CD8-positive, alpha-beta T cell (primary cell): ENCODE measurements at regions of chr9 and their contacts with region 1.

Region 1: GRCh38 chr9:134443168-134444037 is 117.1 kb downstream of the RXRA start:
- DNase-seq: peak; percentile 70 to 94 (median 88)
- ATAC-seq: peak; percentile 99
- H3K4me3 ChIP-seq: no peak overlapping the region
- H3K4me3 Mint-ChIP-seq: no peak overlapping the region
- H3K27ac ChIP-seq: peak overlapping the region in 1 of 2 experiments; percentile 28
- H3K27ac Mint-ChIP-seq: peak overlapping the region; percentile 67
- H3K4me1 ChIP-seq: peaks cover 12% of the 10 kb centered on the region
- H3K4me1 Mint-ChIP-seq: peaks cover 12% of the 10 kb centered on the region
- H3K27me3 ChIP-seq: peaks cover 5 to 8% of the 10 kb centered on the region in 2 experiments
- H3K27me3 Mint-ChIP-seq: peaks cover 4% of the 10 kb centered on the region
- CTCF ChIP-seq: peak; percentile 91

Region 2: DNA sequence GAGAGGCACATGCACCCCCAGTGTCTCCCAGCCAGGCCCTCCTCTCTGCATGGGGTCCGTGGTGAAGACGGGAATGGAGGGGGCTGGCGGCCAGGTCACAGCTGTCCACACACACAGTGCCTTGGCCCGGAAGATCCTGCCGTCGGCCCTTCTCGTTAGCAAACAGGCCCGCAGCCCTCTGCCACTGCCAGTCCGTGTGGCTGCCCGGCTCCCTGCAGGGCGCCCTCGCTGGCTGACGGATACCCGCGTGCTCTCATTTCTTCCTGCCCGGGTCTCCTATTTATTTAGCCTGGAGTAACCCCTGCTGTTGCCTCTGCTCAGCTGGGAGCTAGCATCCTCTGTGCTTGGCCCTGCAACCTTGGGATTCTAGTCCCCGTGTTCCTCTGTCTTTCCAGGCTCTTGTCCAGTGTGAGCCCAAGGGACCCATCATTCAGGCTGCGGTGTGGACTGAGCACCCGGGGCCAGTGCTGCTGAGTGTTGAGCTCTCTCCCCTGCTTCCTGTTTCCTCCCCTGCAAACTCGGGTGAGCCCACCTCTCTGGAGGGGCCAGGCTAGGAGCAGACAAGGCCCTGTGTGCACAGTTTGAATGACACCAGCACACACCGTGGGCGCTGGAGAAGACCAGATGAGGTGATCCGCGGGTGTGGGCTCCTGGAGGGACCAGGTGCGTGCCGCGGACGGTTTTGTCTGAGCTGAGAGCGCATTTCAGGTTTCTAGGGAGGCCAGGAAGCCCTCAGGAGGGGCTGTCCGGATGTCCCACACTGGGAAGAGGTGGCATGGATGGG is 264.4 kb before region 1 on chr9:
- CTCF ChIA-PET with region 1: interaction called, 18 read pairs
- POLR2A ChIA-PET with region 1: no interaction called
- intact Hi-C with region 1: no loop called
- DNase-seq: peak in 1 of 9 experiments; percentile 13
- ATAC-seq: no peak
- H3K4me3 ChIP-seq: no peak overlapping the region
- H3K4me3 Mint-ChIP-seq: no peak overlapping the region
- H3K27ac ChIP-seq: no peak overlapping the region
- H3K27ac Mint-ChIP-seq: no peak overlapping the region
- H3K4me1 ChIP-seq: peaks cover 22% of the 10 kb centered on the region
- H3K4me1 Mint-ChIP-seq: peaks cover 32% of the 10 kb centered on the region
- H3K27me3 ChIP-seq: peaks cover 0 to 8% of the 10 kb centered on the region in 2 experiments
- H3K27me3 Mint-ChIP-seq: no peaks in the 10 kb centered on the region
- CTCF ChIP-seq: no peak

Region 3: GRCh38 chr9:134344068-134344799 is 99.2 kb before region 1 on chr9:
- CTCF ChIA-PET with region 1: interaction called, 11 read pairs
- POLR2A ChIA-PET with region 1: no interaction called
- intact Hi-C with region 1: no loop called
- DNase-seq: peak in 8 of 9 experiments; percentile 18 to 69 (median 48)
- ATAC-seq: peak; percentile 67
- H3K4me3 ChIP-seq: no peak overlapping the region
- H3K4me3 Mint-ChIP-seq: peak overlapping the region; percentile 22
- H3K27ac ChIP-seq: peak overlapping the region in 1 of 2 experiments; percentile 16
- H3K27ac Mint-ChIP-seq: no peak overlapping the region
- H3K4me1 ChIP-seq: peaks cover 15% of the 10 kb centered on the region
- H3K4me1 Mint-ChIP-seq: peaks cover 17% of the 10 kb centered on the region
- H3K27me3 ChIP-seq: no peaks in the 10 kb centered on the region
- H3K27me3 Mint-ChIP-seq: no peaks in the 10 kb centered on the region
- CTCF ChIP-seq: no peak

Region 4: DNA sequence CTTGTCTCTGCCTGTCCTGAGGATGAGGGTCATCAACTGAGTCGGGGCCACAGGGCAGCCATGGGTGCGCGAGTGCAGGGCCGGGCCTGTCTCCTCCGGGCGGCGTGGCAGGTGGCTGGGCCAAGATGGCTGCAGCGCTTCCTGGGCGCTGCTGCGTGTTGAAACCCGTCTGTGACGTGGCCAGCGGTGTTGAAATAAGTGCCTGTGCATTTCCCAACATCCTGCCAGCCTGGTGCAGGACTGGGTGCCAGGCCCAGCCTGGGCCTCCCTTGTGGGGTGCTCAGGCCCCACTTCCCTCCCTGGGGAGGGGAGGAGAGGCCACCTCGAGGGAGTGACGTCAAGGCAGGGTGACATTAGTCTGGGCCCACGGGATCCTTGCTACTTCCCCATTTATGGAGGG is 71.7 kb before region 1 on chr9:
- CTCF ChIA-PET with region 1: interaction called, 4 read pairs
- POLR2A ChIA-PET with region 1: no interaction called
- intact Hi-C with region 1: loop called in 1 of 2 experiments (anchors 2 kb)
- DNase-seq: peak in 1 of 9 experiments; percentile 48
- ATAC-seq: no peak
- H3K4me3 ChIP-seq: no peak overlapping the region
- H3K4me3 Mint-ChIP-seq: no peak overlapping the region
- H3K27ac ChIP-seq: no peak overlapping the region
- H3K27ac Mint-ChIP-seq: no peak overlapping the region
- H3K4me1 ChIP-seq: no peaks in the 10 kb centered on the region
- H3K4me1 Mint-ChIP-seq: peaks cover 8% of the 10 kb centered on the region
- H3K27me3 ChIP-seq: no peaks in the 10 kb centered on the region
- H3K27me3 Mint-ChIP-seq: no peaks in the 10 kb centered on the region
- CTCF ChIP-seq: no peak

Region 5: GRCh38 chr9:134391314-134392231 is 51.8 kb before region 1 on chr9:
- CTCF ChIA-PET with region 1: interaction called, 17 read pairs
- POLR2A ChIA-PET with region 1: interaction called, 5 read pairs
- intact Hi-C with region 1: loop called in 1 of 2 experiments (anchors 5 kb)
- DNase-seq: peak; percentile 51 to 96 (median 74)
- ATAC-seq: peak; percentile 65
- H3K4me3 ChIP-seq: peak overlapping the region; percentile 41 to 44
- H3K4me3 Mint-ChIP-seq: peak overlapping the region; percentile 77
- H3K27ac ChIP-seq: peak overlapping the region; percentile 92 to 94
- H3K27ac Mint-ChIP-seq: peak overlapping the region; percentile 98
- H3K4me1 ChIP-seq: peaks cover 62% of the 10 kb centered on the region
- H3K4me1 Mint-ChIP-seq: peaks cover 51% of the 10 kb centered on the region
- H3K27me3 ChIP-seq: no peaks in the 10 kb centered on the region
- H3K27me3 Mint-ChIP-seq: no peaks in the 10 kb centered on the region
- CTCF ChIP-seq: no peak